A673 (cell line): ENCODE measurements at regions of chr19 and their contacts with region 1.

Region 1: DNA sequence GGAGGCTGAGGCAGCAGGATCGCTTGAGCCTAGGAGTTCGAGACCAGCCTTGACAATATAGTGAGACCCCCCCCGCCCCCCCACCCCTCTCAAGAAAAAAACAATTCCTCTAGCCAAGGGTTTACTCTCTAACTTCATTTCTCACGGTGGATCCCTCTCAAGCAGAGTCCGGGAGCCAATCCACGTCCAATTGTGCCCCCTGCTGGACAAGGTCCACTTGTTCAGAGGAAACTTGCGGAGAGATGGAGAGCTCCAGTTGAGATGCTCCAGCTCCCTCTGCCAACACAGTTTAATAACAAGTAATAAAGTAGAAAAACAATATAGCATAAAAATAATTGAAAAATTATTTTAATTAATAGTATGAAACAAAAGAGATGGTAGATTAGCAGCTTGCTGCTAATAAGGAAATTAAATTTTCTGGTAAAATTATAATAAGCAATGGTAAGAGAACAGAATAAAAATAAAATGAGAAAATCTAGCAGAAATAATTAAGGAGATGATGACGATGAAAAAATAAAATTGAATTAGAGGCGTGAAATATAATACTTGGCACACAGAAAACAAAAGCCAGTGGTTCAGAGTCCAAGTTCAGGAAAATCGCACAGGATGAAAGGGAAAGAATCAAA is 14.5 kb upstream of the SIGLEC14 start:
- DNase-seq: peak; percentile 85
- H3K4me3 ChIP-seq: no peak overlapping the region
- H3K27ac ChIP-seq: no peak overlapping the region
- H3K4me1 ChIP-seq: no peaks in the 10 kb centered on the region
- H3K27me3 ChIP-seq: peaks cover 20% of the 10 kb centered on the region
- CTCF ChIP-seq: peak; percentile 72

Region 2: GRCh38 chr19:51338563-51339312 is 322.4 kb before region 1 on chr19:
- CTCF ChIA-PET with region 1: interaction called, 4 read pairs
- POLR2A ChIA-PET with region 1: no interaction called
- intact Hi-C with region 1: loop called (anchors 10 kb)
- DNase-seq: peak; percentile 86
- H3K4me3 ChIP-seq: peak overlapping the region; percentile 61
- H3K27ac ChIP-seq: peak overlapping the region; percentile 24
- H3K4me1 ChIP-seq: peaks cover 8% of the 10 kb centered on the region
- H3K27me3 ChIP-seq: no peaks in the 10 kb centered on the region
- CTCF ChIP-seq: peak; percentile 89

Region 3: DNA sequence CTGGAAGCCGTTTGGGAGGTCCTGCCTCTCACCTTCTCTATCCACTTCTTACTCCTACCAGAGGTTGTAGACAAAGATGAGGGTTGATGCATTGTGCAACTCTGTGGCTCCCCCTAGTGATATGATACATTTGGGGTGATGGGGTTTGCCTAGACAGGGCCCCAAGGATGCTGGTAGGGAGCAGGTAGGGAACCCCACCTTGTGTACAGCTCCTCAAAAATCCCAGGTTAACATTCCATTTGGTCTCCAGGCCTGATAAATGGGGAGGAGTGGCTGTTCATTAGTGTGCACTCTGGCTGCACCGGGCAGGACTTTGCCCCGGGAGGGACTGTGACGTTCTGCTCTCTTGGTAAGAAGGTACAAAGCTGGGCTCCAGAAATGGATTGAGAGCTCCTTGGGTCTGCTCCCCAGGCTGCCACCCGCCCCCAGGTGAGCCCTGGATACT is 222.0 kb before region 1 on chr19:
- CTCF ChIA-PET with region 1: interaction called, 14 read pairs
- POLR2A ChIA-PET with region 1: no interaction called
- intact Hi-C with region 1: no loop called
- DNase-seq: peak; percentile 23
- H3K4me3 ChIP-seq: no peak overlapping the region
- H3K27ac ChIP-seq: no peak overlapping the region
- H3K4me1 ChIP-seq: no peaks in the 10 kb centered on the region
- H3K27me3 ChIP-seq: peaks cover 57% of the 10 kb centered on the region
- CTCF ChIP-seq: peak; percentile 55

Region 4: DNA sequence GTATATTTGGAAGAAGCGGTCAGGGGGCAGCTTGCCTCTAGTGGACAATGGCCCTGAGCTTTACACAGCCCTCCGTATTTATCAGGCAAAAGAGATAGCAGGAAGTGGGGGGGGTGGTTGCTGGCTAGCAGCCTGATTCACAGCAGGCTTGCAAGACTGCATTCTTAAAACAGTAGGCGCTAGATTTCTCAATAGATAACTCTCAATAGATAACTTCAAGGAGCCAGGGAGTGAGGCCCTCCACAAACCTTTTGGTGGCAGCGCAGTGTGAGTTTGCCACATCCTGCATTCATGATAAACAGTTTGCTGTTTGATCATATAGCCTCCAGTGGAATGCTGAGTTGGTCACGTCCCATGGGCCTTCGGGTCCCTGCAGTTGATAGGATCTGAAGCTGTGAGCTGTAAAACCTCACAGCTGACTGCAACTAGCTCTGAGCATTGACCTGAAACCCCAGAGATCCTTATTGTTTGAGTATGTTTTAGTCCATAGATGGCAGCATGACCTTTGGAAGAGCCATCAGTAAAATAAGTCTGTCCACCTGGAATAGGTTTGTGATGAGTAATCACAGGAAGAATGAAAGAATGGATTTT is 146.1 kb after region 1 on chr19:
- CTCF ChIA-PET with region 1: interaction called, 4 read pairs
- POLR2A ChIA-PET with region 1: no interaction called
- intact Hi-C with region 1: loop called (anchors 5 kb)
- DNase-seq: peak; percentile 85
- H3K4me3 ChIP-seq: no peak overlapping the region
- H3K27ac ChIP-seq: no peak overlapping the region
- H3K4me1 ChIP-seq: peaks cover 27% of the 10 kb centered on the region
- H3K27me3 ChIP-seq: no peaks in the 10 kb centered on the region
- CTCF ChIP-seq: no peak